ACHN (cell line): ENCODE measurements at regions of chr7 and their contacts with region 1.

Region 1: GRCh38 chr7:143214789-143215679 is 6.8 kb upstream of the TAS2R40 start:
- DNase-seq: peak; percentile 91

Region 2: GRCh38 chr7:142898377-142899170 is 316.5 kb before region 1 on chr7:
- in situ Hi-C with region 1: no loop called
- DNase-seq: no peak

Region 3: DNA sequence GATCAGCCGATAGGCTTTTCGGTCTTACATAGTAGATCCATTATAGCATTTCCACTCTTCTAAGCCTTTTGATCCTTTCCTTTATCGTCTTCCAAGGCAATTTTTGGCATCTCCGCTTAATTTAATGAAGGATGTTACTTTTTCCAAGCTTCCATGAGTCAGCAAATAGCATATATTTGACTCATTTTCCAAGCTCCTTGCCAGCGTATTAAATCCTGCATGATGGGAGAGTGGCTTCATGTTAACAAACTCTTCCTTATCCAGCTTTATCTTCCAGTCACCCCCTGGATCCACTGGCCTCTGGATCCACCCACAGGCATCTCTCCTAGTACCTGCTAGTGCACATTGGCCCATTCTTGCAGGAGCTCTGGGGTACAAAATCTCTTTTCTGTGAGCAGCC is 201.1 kb before region 1 on chr7:
- in situ Hi-C with region 1: loop called (anchors 10 kb)
- DNase-seq: peak; percentile 23

Region 4: DNA sequence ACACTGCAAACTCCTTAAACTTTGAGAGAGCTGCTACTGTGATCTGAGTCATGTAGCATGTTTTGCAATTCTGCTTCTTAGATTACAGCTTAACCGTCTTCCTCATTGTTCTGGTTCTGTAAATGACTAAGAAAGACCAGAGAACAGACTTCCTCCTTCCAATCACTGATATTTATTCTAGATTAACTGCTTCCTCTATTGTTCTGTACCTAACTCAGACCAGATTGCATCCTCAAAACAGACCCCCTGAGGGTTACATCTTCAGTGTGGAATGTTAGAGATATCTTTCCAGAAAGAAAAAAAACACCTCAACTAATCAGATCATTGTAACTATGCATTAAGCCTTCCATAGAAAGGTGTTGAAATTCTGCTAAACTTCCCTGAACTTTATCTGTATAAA is 88.9 kb before region 1 on chr7:
- in situ Hi-C with region 1: no loop called
- DNase-seq: no peak